IMR-90 (cell line): ENCODE measurements at regions of chr10 and their contacts with region 1.

Region 1: GRCh38 chr10:102752934-102753664 is 9.4 kb downstream of the WBP1L start:
- DNase-seq: peak; percentile 83
- ATAC-seq: peak; percentile 77
- H3K4me3 ChIP-seq: no peak overlapping the region
- H3K27ac ChIP-seq: peak overlapping the region; percentile 13; the same call in 1 of the 2 replicates
- H3K4me1 ChIP-seq: peaks cover 14% of the 10 kb centered on the region
- H3K27me3 ChIP-seq: no peaks in the 10 kb centered on the region
- CTCF ChIP-seq: peak; percentile 56
- POLR2A ChIP-seq: no peak
- RAD21 ChIP-seq: peak; percentile 63

Region 2: DNA sequence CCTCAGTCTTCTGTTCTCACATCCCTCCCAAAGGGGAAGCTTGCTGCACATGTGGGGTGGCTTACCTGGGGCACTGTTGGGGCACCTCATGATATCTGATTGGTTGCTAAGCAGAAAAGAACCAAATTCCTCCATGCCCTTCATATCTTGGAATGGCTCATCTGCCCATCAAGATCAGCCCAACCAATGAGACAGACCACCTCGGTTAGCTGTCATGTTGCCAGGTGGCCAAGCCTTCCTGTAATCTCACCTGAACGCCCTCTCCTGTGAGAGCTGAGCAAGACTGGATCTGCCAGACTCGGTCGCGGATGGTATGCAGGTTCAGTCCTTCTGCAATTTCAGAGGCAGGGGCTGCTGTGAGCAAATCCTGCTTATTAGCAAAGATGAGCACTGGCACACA is 67.5 kb before region 1 on chr10:
- CTCF ChIA-PET with region 1: interaction called, 10 read pairs
- POLR2A ChIA-PET with region 1: no interaction called
- dilution Hi-C with region 1: no loop called
- in situ Hi-C with region 1: no loop called
- intact Hi-C with region 1: no loop called
- DNase-seq: no peak
- ATAC-seq: no peak
- H3K4me3 ChIP-seq: no peak overlapping the region
- H3K27ac ChIP-seq: no peak overlapping the region
- H3K4me1 ChIP-seq: no peaks in the 10 kb centered on the region
- H3K27me3 ChIP-seq: no peaks in the 10 kb centered on the region
- CTCF ChIP-seq: no peak
- POLR2A ChIP-seq: no peak
- RAD21 ChIP-seq: no peak

Region 3: DNA sequence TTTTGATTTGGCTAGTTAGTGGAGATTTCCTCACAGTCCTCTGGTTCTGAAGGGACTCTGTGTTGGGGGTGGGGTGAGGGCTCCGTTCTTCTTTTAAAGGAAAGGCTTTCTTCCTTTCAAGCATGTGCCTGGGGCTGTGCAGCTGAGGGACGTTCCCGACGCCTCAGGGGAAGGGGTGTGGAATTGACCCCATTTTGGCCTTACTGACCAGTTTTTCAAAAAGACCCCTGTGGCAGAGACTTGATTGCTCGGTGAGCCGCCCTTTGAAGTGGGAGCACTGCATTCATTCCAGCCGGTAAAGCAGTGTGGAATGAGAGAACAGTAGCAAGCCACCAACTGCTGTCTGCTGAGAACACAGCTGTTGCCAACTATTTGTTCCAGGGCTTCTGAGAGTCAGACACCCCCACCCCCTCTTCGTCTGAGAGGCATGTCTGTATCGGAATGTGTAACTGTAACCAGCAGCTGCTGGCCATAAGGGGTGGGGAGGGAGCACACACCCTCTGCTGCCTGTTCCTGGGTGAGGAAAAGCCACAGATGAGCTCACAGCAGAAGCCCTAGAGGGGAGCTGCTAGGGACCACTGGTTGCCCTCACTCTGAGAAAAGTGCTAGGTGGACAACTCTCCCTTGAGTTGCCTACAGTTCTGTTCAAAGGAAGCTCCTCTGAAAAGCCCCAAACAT is 23.8 kb after region 1 on chr10:
- CTCF ChIA-PET with region 1: interaction called, 6 read pairs
- POLR2A ChIA-PET with region 1: no interaction called
- dilution Hi-C with region 1: no loop called
- in situ Hi-C with region 1: no loop called
- intact Hi-C with region 1: loop called (anchors 2 kb)
- DNase-seq: peak; percentile 98
- ATAC-seq: peak; percentile 93
- H3K4me3 ChIP-seq: peak overlapping the region; percentile 22; the same call in 1 of the 2 replicates
- H3K27ac ChIP-seq: peak overlapping the region; percentile 34; the same call in 1 of the 2 replicates
- H3K4me1 ChIP-seq: peaks cover 27% of the 10 kb centered on the region
- H3K27me3 ChIP-seq: peaks cover 2% of the 10 kb centered on the region
- CTCF ChIP-seq: 0 out of 2 replicates have a peak, but pooled peaks have one; percentile 6
- POLR2A ChIP-seq: peak; percentile 84
- RAD21 ChIP-seq: peak; percentile 37

Region 4: DNA sequence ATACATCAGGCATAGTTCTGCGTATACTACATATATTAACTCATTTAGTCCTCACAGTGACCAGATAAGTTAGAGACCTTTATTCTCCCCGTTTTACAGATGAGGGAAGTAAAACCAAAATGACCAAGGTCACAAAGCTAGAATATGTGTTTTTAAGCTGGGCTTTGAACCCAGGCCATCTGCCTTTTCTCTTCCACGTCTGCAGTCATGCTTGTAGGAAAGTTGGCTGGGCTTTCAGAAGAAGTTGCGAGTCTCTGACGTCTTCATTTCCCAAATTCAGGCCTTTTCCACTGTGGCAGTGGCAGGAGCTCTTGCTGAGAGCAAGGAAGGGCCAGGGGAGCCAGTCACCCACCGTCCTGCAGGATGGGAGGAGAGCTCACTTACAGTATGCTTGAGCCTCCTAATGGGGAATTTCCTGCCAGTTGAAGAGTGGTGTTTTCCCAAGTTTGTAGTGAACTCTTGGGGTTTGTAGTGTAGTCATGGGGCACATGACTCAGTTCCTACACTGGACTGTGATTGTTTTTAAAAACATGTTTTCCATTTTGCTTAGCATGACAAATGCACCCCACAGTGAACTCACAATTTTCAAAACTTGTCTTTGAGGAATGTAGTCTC is 49.9 kb after region 1 on chr10:
- CTCF ChIA-PET with region 1: no interaction called
- POLR2A ChIA-PET with region 1: no interaction called
- dilution Hi-C with region 1: no loop called
- in situ Hi-C with region 1: no loop called
- intact Hi-C with region 1: loop called (anchors 5 kb)
- DNase-seq: peak; percentile 99
- ATAC-seq: peak; percentile 96
- H3K4me3 ChIP-seq: no peak overlapping the region
- H3K27ac ChIP-seq: peak overlapping the region; percentile 62
- H3K4me1 ChIP-seq: peaks cover 12% of the 10 kb centered on the region
- H3K27me3 ChIP-seq: no peaks in the 10 kb centered on the region
- CTCF ChIP-seq: 0 out of 2 replicates have a peak, but pooled peaks have one; percentile 6
- POLR2A ChIP-seq: no peak
- RAD21 ChIP-seq: peak; percentile 35

Region 5: DNA sequence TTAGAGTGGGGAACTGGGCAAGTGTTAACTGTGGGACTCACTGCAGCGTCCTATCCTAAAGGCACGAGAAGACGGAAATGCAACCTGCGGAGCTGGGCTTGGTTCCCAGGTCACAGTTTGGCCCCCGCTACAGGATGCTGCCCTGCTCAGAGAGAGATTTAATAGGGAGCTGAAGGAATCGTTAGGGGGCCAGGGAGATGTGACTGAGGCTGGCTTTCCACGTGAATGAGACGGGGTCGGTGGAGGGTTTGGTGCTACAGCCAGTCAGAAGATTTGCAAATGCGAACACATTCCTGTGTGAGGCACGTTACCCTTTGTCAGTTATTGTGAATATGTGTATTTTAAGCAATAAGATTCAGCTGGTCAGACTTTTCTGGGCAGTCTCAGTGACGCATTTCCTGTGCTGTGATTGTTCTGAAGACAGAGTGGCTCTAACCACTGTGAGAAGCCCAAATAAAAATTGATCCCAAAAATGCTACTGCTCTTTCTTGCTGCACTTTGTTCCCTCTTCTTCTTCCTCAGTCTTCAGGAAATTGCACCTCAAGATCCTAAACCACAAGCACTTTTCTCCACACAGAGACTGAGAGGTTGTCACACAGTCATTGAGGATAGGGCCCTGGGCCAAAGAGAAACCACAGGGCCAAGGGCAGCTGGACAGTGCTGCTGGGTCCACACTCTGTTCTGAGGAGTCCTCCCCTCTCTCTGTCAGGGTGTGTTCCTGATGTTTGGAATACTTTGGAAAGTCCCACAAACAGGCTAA is 62.9 kb after region 1 on chr10:
- CTCF ChIA-PET with region 1: no interaction called
- POLR2A ChIA-PET with region 1: no interaction called
- dilution Hi-C with region 1: no loop called
- in situ Hi-C with region 1: no loop called
- intact Hi-C with region 1: loop called (anchors 2 kb)
- DNase-seq: peak; percentile 96
- ATAC-seq: peak; percentile 79
- H3K4me3 ChIP-seq: no peak overlapping the region
- H3K27ac ChIP-seq: peak overlapping the region; percentile 74
- H3K4me1 ChIP-seq: peaks cover 27% of the 10 kb centered on the region
- H3K27me3 ChIP-seq: no peaks in the 10 kb centered on the region
- CTCF ChIP-seq: no peak
- POLR2A ChIP-seq: peak; percentile 63
- RAD21 ChIP-seq: no peak